OCI-LY7 (cell line): ENCODE measurements at regions of chr16 and their contacts with region 1.

Region 1: GRCh38 chr16:24906199-24907020 is 60.6 kb downstream of the SLC5A11 start:
- DNase-seq: peak; percentile 41
- H3K4me3 ChIP-seq: no peak overlapping the region
- H3K27ac ChIP-seq: no peak overlapping the region
- H3K4me1 ChIP-seq: no peaks in the 10 kb centered on the region
- CTCF ChIP-seq: peak; percentile 77

Region 2: DNA sequence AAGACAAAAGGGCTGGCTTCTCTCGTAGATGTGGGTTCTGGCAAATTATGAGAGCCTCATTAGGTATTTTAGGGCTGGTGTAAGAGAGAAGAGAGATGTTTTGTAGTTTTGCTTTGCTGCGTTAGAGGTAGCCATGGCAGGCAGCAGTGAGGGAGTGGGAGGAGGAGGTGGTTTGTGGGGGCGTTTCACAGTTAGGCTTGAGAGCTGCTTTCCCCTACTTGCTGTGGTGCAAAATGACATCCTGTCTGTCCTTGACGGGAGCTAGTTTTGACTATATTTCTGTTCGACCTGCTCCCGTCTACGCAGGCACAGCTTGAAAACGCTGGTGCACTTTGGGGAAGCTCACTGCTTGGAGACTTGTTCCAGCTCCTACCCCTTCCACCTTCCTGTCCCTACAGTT is 14.8 kb after region 1 on chr16:
- CTCF ChIA-PET with region 1: no interaction called
- POLR2A ChIA-PET with region 1: no interaction called
- intact Hi-C with region 1: no loop called
- DNase-seq: no peak
- H3K4me3 ChIP-seq: no peak overlapping the region
- H3K27ac ChIP-seq: no peak overlapping the region
- H3K4me1 ChIP-seq: no peaks in the 10 kb centered on the region
- CTCF ChIP-seq: no peak

Region 3: DNA sequence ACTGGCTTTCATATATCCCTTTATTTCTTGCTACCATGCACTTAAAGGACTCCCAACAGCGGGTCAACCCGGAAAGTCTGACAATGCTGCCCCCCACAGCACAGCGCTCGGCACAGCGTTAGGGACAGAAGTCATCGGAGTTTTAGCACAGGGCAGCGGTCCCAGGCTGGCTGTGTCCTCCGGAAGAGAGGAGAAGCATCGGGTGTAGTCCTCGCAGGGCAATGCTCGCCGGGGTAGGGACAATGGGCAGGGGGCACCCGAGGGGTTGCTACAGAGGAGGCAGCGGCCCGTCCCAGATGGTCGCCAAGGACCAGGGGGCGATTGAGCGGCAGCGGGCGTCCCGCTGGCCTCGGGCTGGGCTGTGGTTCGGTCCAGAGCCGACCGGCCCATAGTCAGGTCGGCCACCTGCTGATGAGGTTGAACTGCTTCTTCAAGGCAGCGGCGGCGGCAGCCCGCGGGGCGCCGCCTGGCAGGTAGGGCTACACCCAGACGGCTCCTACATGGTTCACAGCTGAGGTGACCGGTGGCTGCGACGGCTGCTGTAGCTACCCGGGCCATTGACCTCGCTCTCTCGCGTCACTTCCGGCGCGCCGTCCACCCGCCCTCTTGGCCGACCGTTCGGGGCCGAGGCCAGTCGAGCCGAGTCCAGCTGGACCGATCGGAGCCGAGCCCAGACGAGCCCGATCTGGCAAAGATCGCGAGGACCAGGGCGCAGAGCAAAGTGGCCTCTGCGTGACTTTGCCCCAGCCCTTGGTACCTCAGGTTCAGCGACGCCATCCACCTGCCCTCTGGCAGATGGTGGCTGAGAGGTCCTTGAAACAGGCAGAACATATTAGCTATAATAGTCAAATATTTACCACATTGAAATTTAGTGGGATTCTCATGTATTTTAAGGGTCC is 200.4 kb after region 1 on chr16:
- CTCF ChIA-PET with region 1: interaction called, 4 read pairs
- POLR2A ChIA-PET with region 1: no interaction called
- intact Hi-C with region 1: loop called (anchors 5 kb)
- DNase-seq: no peak
- H3K4me3 ChIP-seq: no peak overlapping the region
- H3K27ac ChIP-seq: no peak overlapping the region
- H3K4me1 ChIP-seq: peaks cover 25% of the 10 kb centered on the region
- CTCF ChIP-seq: peak; percentile 41